AG04450 (cell line): ENCODE measurements at regions of chr19 and their contacts with region 1.

Region 1: GRCh38 chr19:38095411-38096308 is 128.4 kb downstream of the DPF1 start:
- DNase-seq: no peak
- H3K4me3 ChIP-seq: no peak overlapping the region
- H3K27ac ChIP-seq: peak overlapping the region; percentile 21
- H3K27me3 ChIP-seq: no peaks in the 10 kb centered on the region
- CTCF ChIP-seq: peak; percentile 76

Region 2: DNA sequence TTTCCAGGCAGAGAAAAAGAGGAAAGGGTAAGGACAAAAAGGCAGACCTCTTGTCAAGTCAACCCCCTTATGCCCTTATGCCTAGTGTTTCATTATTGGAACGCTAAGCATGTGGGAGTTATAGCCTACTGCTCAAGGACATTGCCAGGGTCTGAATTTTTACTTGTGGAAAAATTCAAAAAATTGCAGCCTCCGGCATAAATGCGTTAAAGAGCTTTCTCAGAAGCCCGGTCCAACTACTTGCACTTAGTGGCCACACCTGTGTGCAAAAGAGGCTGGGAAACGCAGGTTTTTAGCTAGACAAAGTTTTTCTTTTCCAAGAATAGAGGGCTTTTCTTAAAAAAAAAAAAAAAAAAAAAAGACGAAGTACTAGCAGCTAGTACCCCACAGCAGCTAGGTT is 11.4 kb before region 1 on chr19:
- CTCF ChIA-PET with region 1: interaction called, 14 read pairs
- POLR2A ChIA-PET with region 1: no interaction called
- DNase-seq: no peak
- H3K4me3 ChIP-seq: no peak overlapping the region
- H3K27ac ChIP-seq: no peak overlapping the region
- H3K27me3 ChIP-seq: no peaks in the 10 kb centered on the region
- CTCF ChIP-seq: no peak

Region 3: DNA sequence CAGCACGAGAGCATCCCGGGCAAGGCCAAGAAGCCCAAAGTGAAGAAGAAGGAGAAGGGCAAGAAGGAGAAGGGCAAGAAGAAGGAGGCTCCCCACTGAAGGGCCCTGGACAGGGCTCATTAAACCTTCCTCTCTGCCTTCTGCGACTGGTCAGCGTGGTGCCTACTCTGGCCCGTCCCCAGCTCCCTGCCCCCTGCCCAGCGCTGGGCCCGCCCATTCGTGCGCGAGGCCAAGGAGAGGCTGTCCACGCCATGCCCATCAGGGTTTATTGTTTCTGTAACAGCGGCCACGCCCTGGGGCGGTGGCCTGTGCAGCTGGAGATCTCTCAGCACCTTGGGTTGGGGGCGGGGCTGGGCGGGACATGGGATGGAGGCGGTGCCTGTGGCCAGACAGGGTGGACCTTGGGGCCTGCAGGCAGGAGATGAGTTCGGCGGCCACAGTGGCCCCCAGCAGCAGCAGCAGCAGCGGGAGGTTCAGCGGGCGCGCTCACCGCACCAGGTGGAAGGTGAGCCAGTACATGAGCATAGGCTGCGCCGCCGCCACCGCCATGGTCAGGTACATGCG is 209.3 kb after region 1 on chr19:
- CTCF ChIA-PET with region 1: no interaction called
- POLR2A ChIA-PET with region 1: no interaction called
- DNase-seq: no peak
- H3K4me3 ChIP-seq: no peak overlapping the region
- H3K27ac ChIP-seq: no peak overlapping the region
- H3K27me3 ChIP-seq: no peaks in the 10 kb centered on the region
- CTCF ChIP-seq: no peak